ENCODE measurements at regions of chr2 and their contacts with region 1.

Region 1: DNA sequence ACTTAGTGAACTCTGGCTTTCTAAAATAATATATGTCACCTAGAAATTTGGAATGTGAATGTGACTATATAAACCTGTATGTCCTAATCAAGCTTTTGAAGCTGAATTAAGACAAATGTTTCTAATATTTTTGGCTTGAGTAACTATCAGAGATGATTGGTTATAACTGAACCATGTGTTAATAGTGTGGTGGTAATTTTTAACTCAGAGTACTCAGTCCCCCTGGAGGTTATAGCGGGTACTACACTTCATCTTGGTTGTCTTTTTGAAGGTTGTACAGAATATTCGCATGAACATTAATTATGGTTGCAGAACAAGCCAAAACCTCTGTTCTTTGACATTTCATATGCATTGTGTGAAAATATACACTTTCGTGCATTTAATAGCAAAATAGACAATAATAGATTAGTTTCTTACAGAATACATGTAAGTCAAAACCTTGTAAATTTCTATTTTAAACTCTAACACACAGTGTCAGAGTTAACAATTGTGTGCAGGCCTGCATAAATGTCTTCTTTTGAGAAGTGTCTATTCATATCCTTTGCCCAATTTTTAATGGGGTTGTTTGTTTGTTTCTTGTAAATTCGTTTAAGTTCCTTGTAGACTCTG is 86.0 kb downstream of the OSBPL6 start:
- DNase-seq: no peak
- H3K4me3 ChIP-seq: no peak overlapping the region
- H3K27ac ChIP-seq: no peak overlapping the region
- H3K4me1 ChIP-seq: no peaks in the 10 kb centered on the region
- H3K27me3 ChIP-seq: no peaks in the 10 kb centered on the region
- CTCF ChIP-seq: peak; percentile 81

Region 2: GRCh38 chr2:178112202-178113152 is 167.9 kb before region 1 on chr2 and contains the start of gene RBM45:
- intact Hi-C with region 1: loop called (anchors 5 kb)
- DNase-seq: peak; percentile 91 to 97
- H3K4me3 ChIP-seq: peak within 1 kb of the TSS; percentile 75 to 78
- H3K27ac ChIP-seq: peak within 1 kb of the TSS; percentile 76 to 81
- H3K4me1 ChIP-seq: peaks cover 0 to 25% (median 12%) of the 10 kb centered on the region in 4 donors
- H3K27me3 ChIP-seq: no peaks in the 10 kb centered on the region
- CTCF ChIP-seq: peak; percentile 95 to 97

Region 3: DNA sequence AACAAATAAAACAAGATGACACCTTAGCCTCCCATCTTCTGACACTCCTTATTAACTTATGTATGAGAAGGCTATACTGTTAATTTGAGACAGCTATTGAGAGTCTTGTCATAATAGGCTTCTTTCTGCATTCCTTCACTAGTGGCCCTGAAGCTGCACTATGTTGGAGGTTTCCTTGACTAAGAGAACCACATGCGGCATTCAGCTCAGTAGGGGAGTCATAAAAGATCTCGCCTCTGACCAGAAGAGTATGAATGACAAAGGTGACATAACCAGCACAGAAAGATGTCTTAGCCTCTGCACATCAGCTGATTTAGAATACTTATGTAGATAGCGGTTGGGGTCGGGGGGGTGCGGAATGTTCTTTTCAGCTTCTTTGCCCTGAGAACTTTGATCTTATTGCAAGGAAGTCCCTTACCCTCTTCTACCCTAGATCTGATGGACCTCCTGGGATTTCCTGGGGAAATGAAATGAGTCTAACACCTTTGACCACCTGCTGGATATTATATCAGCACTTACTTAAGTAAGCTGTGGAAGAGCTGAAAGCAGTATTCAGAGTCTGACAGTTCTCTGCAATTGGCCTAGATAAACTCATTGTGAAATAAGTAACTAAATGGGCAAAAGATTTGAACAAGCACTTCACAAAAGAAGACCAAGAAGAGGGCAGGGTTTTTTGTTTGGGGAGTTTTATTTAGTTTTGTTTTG is 143.9 kb before region 1 on chr2:
- intact Hi-C with region 1: loop called (anchors 5 kb)
- DNase-seq: no peak
- H3K4me3 ChIP-seq: no peak overlapping the region
- H3K27ac ChIP-seq: no peak overlapping the region
- H3K4me1 ChIP-seq: no peaks in the 10 kb centered on the region
- H3K27me3 ChIP-seq: no peaks in the 10 kb centered on the region
- CTCF ChIP-seq: no peak

Region 4: GRCh38 chr2:178193823-178194599 is 86.3 kb before region 1 on chr2 and contains the start of gene OSBPL6:
- intact Hi-C with region 1: loop called (anchors 10 kb)
- DNase-seq: peak; percentile 78 to 91
- H3K4me3 ChIP-seq: peak within 1 kb of the TSS; percentile 87 to 96
- H3K27ac ChIP-seq: peak within 1 kb of the TSS; percentile 95 to 97
- H3K4me1 ChIP-seq: peaks cover 0 to 12% (median 1%) of the 10 kb centered on the region in 4 donors
- H3K27me3 ChIP-seq: no peaks in the 10 kb centered on the region
- CTCF ChIP-seq: peak; percentile 42 to 44